ENCODE measurements at regions of chr9 and their contacts with region 1.

Region 1: GRCh38 chr9:19925817-19926503 is 137.1 kb upstream of the SLC24A2 start:
- DNase-seq: peak; percentile 68
- ATAC-seq: peak; percentile 98
- H3K4me3 ChIP-seq: peak overlapping the region; percentile 56
- H3K27ac ChIP-seq: no peak overlapping the region
- H3K4me1 ChIP-seq: no peaks in the 10 kb centered on the region
- H3K27me3 ChIP-seq: peaks cover 15% of the 10 kb centered on the region
- CTCF ChIP-seq: peak; percentile 96
- POLR2A ChIP-seq: 0 out of 2 replicates have a peak, but pooled peaks have one; percentile 29
- RAD21 ChIP-seq: peak; percentile 98

Region 2: GRCh38 chr9:19464764-19465585 is 461.0 kb before region 1 on chr9:
- CTCF ChIA-PET with region 1: interaction called, 11 read pairs
- POLR2A ChIA-PET with region 1: no interaction called
- dilution Hi-C with region 1: no loop called
- in situ Hi-C with region 1: no loop called
- intact Hi-C with region 1: no loop called
- DNase-seq: peak; percentile 81
- ATAC-seq: peak; percentile 96
- H3K4me3 ChIP-seq: peak overlapping the region; percentile 21; the same call in 1 of the 2 replicates
- H3K27ac ChIP-seq: no peak overlapping the region
- H3K4me1 ChIP-seq: 0 out of 2 replicates have a peak, but pooled peaks cover 2% of the 10 kb centered on the region
- H3K27me3 ChIP-seq: peaks cover 8% of the 10 kb centered on the region
- CTCF ChIP-seq: peak; percentile 61
- POLR2A ChIP-seq: no peak
- RAD21 ChIP-seq: peak; percentile 9; the same call in 1 of the 2 replicates

Region 3: DNA sequence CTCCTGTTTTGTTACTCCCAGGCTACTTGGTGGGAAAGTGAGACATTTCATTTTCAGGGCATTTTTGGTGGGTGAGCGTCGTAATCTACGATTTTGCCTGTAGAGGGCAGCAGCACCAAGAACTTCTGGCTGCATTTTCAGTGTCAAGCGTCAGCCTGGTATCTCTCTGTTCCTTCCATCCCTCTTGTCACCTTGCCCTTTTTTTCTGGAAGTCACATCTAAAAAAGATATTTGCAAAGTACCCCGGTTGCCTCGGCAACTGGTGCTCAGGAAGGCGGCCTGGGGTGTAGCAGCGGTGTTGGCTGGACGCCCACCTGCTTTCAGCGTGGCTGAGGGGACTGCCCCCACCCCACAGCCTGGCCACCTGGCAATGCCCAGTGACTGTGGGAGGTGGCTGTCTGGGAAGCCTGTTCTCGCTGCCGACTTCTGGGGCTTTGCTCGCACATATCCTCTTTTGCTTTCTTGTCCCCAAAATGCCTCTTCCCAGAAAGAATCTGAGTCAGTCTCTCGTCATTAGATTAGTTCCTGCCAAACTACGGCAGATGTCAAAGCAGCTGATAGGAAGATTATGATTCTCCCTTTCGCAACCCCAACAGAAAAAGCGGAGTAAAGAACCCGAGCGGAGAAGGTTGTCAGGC is 432.7 kb before region 1 on chr9:
- CTCF ChIA-PET with region 1: interaction called, 3 read pairs
- POLR2A ChIA-PET with region 1: no interaction called
- dilution Hi-C with region 1: no loop called
- in situ Hi-C with region 1: loop called (anchors 25 kb)
- intact Hi-C with region 1: loop called (anchors 1 kb)
- DNase-seq: peak; percentile 78
- ATAC-seq: peak; percentile 94
- H3K4me3 ChIP-seq: peak overlapping the region; percentile 31
- H3K27ac ChIP-seq: no peak overlapping the region
- H3K4me1 ChIP-seq: no peaks in the 10 kb centered on the region
- H3K27me3 ChIP-seq: peaks cover 21% of the 10 kb centered on the region
- CTCF ChIP-seq: peak; percentile 80
- POLR2A ChIP-seq: no peak
- RAD21 ChIP-seq: peak; percentile 63

Region 4: GRCh38 chr9:20152151-20152725 is 226.3 kb after region 1 on chr9:
- CTCF ChIA-PET with region 1: no interaction called
- POLR2A ChIA-PET with region 1: no interaction called
- dilution Hi-C with region 1: no loop called
- in situ Hi-C with region 1: no loop called
- intact Hi-C with region 1: no loop called
- DNase-seq: no peak
- ATAC-seq: no peak
- H3K4me3 ChIP-seq: no peak overlapping the region
- H3K27ac ChIP-seq: no peak overlapping the region
- H3K4me1 ChIP-seq: no peaks in the 10 kb centered on the region
- H3K27me3 ChIP-seq: peaks cover 3% of the 10 kb centered on the region; the same call in 1 of the 2 replicates
- CTCF ChIP-seq: no peak
- POLR2A ChIP-seq: no peak
- RAD21 ChIP-seq: no peak

Region 5: DNA sequence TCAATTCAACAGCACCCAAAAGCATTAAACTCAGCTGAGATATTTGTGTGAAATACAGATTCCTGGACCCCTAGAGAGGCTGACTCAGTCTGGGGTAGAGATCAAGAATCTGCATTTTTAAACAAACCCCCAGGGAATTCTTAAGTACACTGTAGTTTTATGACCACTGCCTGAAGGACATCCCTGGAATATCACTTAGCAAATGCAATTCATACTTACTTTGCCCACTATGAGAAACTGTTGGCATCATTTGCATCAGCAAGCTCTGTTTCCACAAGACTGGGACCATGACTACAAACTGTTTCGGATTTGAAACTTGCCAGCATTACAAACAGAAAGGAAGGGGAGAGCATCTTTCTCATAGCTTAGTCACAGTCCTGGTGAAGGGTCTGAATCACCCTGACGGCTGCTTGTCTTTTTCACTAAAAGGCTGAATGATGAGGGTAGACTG is 632.6 kb after region 1 on chr9:
- CTCF ChIA-PET with region 1: interaction called, 3 read pairs
- POLR2A ChIA-PET with region 1: no interaction called
- dilution Hi-C with region 1: no loop called
- in situ Hi-C with region 1: no loop called
- intact Hi-C with region 1: loop called (anchors 10 kb)
- DNase-seq: peak; percentile 93
- ATAC-seq: peak; percentile 87
- H3K4me3 ChIP-seq: no peak overlapping the region
- H3K27ac ChIP-seq: peak overlapping the region; percentile 60; the same call in 1 of the 2 replicates
- H3K4me1 ChIP-seq: peaks cover 10% of the 10 kb centered on the region
- H3K27me3 ChIP-seq: no peaks in the 10 kb centered on the region
- CTCF ChIP-seq: no peak
- POLR2A ChIP-seq: no peak
- RAD21 ChIP-seq: no peak

Region 6: GRCh38 chr9:20941174-20941690 is 1015.3 kb after region 1 on chr9:
- CTCF ChIA-PET with region 1: no interaction called
- POLR2A ChIA-PET with region 1: no interaction called
- dilution Hi-C with region 1: no loop called
- in situ Hi-C with region 1: loop called (anchors 10 kb)
- intact Hi-C with region 1: loop called (anchors 1 kb)
- DNase-seq: peak; percentile 71
- ATAC-seq: peak; percentile 95
- H3K4me3 ChIP-seq: no peak overlapping the region
- H3K27ac ChIP-seq: no peak overlapping the region
- H3K4me1 ChIP-seq: no peaks in the 10 kb centered on the region
- H3K27me3 ChIP-seq: no peaks in the 10 kb centered on the region
- CTCF ChIP-seq: peak; percentile 88
- POLR2A ChIP-seq: no peak
- RAD21 ChIP-seq: peak; percentile 91

Measured in IMR-90 (cell line).